Activated CD4-positive, alpha-beta memory T cell treated with anti-CD3 and anti-CD28 coated beads for 36 hours (primary cell): ENCODE measurements at regions of chrX and their contacts with region 1.

Region 1: GRCh38 chrX:11792461-11793421 is 34.7 kb downstream of the MSL3 start:
- DNase-seq: peak; percentile 81
- H3K4me3 Mint-ChIP-seq: peak overlapping the region; percentile 1
- H3K27ac Mint-ChIP-seq: peak overlapping the region; percentile 56
- H3K4me1 Mint-ChIP-seq: peaks cover 23% of the 10 kb centered on the region
- H3K27me3 Mint-ChIP-seq: no peaks in the 10 kb centered on the region

Region 2: DNA sequence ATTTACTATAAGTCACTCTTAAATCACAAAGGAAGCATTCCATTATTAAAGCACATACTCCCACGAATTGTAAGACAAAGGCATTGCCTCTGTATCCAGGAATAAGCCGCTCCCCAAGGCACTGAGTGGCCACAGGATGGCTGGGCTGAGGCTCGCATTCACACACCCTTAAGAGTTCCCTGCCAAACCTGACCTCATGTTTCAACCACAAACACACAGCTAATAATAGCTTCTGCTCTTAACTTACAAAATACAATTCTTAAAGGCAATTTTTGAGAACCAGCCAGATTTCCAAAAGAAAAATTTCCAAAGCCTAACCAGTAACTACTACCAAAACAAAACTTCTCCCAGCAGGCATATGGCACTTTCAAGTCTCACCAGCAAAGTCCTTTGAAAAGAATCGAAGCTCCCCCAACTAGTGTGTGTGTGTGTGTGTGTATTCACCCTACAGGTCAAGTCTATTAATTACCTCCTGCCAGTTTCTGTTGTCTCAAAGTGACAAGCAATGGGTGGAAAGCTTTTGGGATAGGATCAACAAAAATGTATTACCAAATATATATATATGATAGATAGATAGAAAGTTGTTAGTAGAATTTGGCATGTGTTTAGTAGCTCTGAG is 163.0 kb before region 1 on chrX:
- CTCF ChIA-PET with region 1: no interaction called
- POLR2A ChIA-PET with region 1: no interaction called
- intact Hi-C with region 1: no loop called
- DNase-seq: no peak
- H3K4me3 Mint-ChIP-seq: no peak overlapping the region
- H3K27ac Mint-ChIP-seq: no peak overlapping the region
- H3K4me1 Mint-ChIP-seq: no peaks in the 10 kb centered on the region
- H3K27me3 Mint-ChIP-seq: peaks cover 7% of the 10 kb centered on the region

Region 3: GRCh38 chrX:11758400-11759171 is 34.2 kb before region 1 on chrX:
- CTCF ChIA-PET with region 1: interaction called, 9 read pairs
- POLR2A ChIA-PET with region 1: no interaction called
- intact Hi-C with region 1: loop called (anchors 1 kb)
- DNase-seq: peak; percentile 92
- H3K4me3 Mint-ChIP-seq: peak overlapping the region; percentile 95
- H3K27ac Mint-ChIP-seq: peak overlapping the region; percentile 99
- H3K4me1 Mint-ChIP-seq: peaks cover 23% of the 10 kb centered on the region
- H3K27me3 Mint-ChIP-seq: peaks cover under 1% of the 10 kb centered on the region

Region 4: DNA sequence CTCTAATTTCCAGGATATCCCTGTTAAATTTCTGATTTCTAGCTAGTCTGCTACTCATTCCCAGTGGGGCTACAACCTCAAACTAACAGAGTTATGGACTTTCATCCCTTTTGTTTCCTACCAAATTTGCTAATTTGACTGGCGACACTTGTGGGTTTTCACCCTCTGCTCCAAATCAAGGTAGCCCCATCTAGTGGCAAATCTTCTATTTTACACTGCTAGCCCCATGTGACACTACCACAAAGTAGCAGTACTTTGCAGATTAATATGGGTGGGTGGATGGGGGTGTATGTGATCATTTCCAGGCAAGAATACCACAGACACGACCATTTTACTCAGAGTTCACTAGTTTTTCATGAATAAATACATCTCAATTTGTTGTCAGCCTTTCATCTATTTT is 115.6 kb after region 1 on chrX:
- CTCF ChIA-PET with region 1: interaction called, 4 read pairs
- POLR2A ChIA-PET with region 1: no interaction called
- intact Hi-C with region 1: loop called (anchors 1 kb)
- DNase-seq: peak; percentile 15
- H3K4me3 Mint-ChIP-seq: no peak overlapping the region
- H3K27ac Mint-ChIP-seq: no peak overlapping the region
- H3K4me1 Mint-ChIP-seq: no peaks in the 10 kb centered on the region
- H3K27me3 Mint-ChIP-seq: peaks cover 2% of the 10 kb centered on the region

Region 5: GRCh38 chrX:12791257-12792228 is 998.8 kb after region 1 on chrX and contains the start of gene PRPS2:
- CTCF ChIA-PET with region 1: no interaction called
- POLR2A ChIA-PET with region 1: no interaction called
- intact Hi-C with region 1: loop called (anchors 5 kb)
- DNase-seq: peak; percentile 81
- H3K4me3 Mint-ChIP-seq: peak within 1 kb of the TSS; percentile 84
- H3K27ac Mint-ChIP-seq: peak within 1 kb of the TSS; percentile 83
- H3K4me1 Mint-ChIP-seq: peaks cover 26% of the 10 kb centered on the region
- H3K27me3 Mint-ChIP-seq: no peaks in the 10 kb centered on the region
- total RNA-seq, gene PRPS2: 104 to 105 TPM